Activated CD4-positive, alpha-beta memory T cell treated with anti-CD3 and anti-CD28 coated beads, Interleukin-2, amount 10 ng/mL, durations not matched to agents 7 days and 5 days (primary cell): ENCODE measurements at regions of chr5 and their contacts with region 1.

Region 1: GRCh38 chr5:131263648-131264450 is at the start of gene CDC42SE2:
- DNase-seq: peak; percentile 89
- H3K4me3 Mint-ChIP-seq: peak within 1 kb of the TSS; percentile 93
- H3K27ac Mint-ChIP-seq: peak within 1 kb of the TSS; percentile 90
- H3K4me1 Mint-ChIP-seq: peaks cover 51% of the 10 kb centered on the region
- H3K27me3 Mint-ChIP-seq: no peaks in the 10 kb centered on the region
- total RNA-seq, gene CDC42SE2: 163 to 166 TPM

Region 2: GRCh38 chr5:131209506-131210150 is 54.2 kb before region 1 on chr5:
- CTCF ChIA-PET with region 1: interaction called, 7 read pairs
- POLR2A ChIA-PET with region 1: interaction called, 36 read pairs
- DNase-seq: peak; percentile 31
- H3K4me3 Mint-ChIP-seq: peak overlapping the region; percentile 65
- H3K27ac Mint-ChIP-seq: peak overlapping the region; percentile 91
- H3K4me1 Mint-ChIP-seq: peaks cover 49% of the 10 kb centered on the region
- H3K27me3 Mint-ChIP-seq: no peaks in the 10 kb centered on the region

Region 3: GRCh38 chr5:131252824-131253171 is 11.1 kb before region 1 on chr5:
- CTCF ChIA-PET with region 1: interaction called, 61 read pairs
- POLR2A ChIA-PET with region 1: interaction called, 572 read pairs
- DNase-seq: peak; percentile 90
- H3K4me3 Mint-ChIP-seq: peak overlapping the region; percentile 93
- H3K27ac Mint-ChIP-seq: peak overlapping the region; percentile 99
- H3K4me1 Mint-ChIP-seq: peaks cover 69% of the 10 kb centered on the region
- H3K27me3 Mint-ChIP-seq: no peaks in the 10 kb centered on the region

Region 4: GRCh38 chr5:131322926-131323325 is 59.1 kb after region 1 on chr5:
- CTCF ChIA-PET with region 1: interaction called, 6 read pairs
- POLR2A ChIA-PET with region 1: interaction called, 10 read pairs
- DNase-seq: no peak
- H3K4me3 Mint-ChIP-seq: peak overlapping the region; percentile 12
- H3K27ac Mint-ChIP-seq: peak overlapping the region; percentile 63
- H3K4me1 Mint-ChIP-seq: peaks cover 70% of the 10 kb centered on the region
- H3K27me3 Mint-ChIP-seq: no peaks in the 10 kb centered on the region

Region 5: DNA sequence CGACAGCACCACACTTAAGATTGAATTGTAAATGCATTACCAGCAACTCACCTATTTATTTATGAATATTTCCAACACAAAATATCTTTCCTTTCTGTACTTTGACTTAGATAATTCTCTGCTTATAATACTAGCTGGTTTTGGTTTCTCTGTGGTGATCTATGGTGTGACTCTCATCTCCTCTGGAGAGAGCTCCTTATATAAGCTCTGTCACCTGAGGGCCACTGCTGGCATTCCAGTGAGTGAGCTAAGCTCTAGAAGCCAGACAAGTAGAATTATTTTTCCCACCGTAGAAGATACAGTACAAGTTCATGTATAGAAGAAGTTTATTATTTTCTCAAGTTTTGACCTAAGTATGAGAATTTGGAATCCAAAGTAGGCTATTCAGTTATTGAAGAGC is 111.5 kb after region 1 on chr5:
- CTCF ChIA-PET with region 1: interaction called, 88 read pairs
- POLR2A ChIA-PET with region 1: interaction called, 234 read pairs
- DNase-seq: no peak
- H3K4me3 Mint-ChIP-seq: peak overlapping the region; percentile 9
- H3K27ac Mint-ChIP-seq: peak overlapping the region; percentile 52
- H3K4me1 Mint-ChIP-seq: peaks cover 89% of the 10 kb centered on the region
- H3K27me3 Mint-ChIP-seq: no peaks in the 10 kb centered on the region

Region 6: DNA sequence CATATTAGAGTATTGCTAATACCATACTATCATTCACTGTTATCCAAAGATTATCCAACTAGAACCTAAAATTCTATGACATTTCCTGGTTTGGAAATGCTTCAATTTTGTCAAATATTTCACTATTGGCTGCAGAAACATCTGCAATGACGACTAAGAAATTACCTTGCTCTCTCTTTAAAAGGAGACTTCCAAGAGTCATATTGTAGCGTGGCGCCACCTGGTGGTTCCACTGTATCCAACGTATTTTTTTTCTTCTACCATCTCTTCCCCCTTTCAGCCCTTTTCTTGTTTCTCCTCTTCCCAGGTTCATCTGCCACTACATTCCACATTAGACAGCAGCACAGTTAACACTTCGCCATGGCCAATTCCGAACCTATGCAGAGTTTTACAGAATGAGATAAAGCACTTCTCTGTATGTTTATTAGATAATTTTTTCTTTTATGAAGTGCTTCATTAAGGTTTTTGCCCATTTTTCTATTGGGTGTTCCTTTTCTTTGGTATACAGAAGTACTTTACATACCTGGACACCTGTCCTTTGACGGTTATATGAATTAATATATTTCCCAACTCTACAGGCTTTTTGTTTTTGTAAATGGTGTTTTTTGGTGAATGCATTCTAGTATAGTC is 153.5 kb after region 1 on chr5:
- CTCF ChIA-PET with region 1: interaction called, 4 read pairs
- POLR2A ChIA-PET with region 1: interaction called, 35 read pairs
- DNase-seq: peak; percentile 82
- H3K4me3 Mint-ChIP-seq: no peak overlapping the region
- H3K27ac Mint-ChIP-seq: peak overlapping the region; percentile 13
- H3K4me1 Mint-ChIP-seq: peaks cover 41% of the 10 kb centered on the region
- H3K27me3 Mint-ChIP-seq: no peaks in the 10 kb centered on the region